ENCODE measurements at regions of chr10 and their contacts with region 1.

Region 1: DNA sequence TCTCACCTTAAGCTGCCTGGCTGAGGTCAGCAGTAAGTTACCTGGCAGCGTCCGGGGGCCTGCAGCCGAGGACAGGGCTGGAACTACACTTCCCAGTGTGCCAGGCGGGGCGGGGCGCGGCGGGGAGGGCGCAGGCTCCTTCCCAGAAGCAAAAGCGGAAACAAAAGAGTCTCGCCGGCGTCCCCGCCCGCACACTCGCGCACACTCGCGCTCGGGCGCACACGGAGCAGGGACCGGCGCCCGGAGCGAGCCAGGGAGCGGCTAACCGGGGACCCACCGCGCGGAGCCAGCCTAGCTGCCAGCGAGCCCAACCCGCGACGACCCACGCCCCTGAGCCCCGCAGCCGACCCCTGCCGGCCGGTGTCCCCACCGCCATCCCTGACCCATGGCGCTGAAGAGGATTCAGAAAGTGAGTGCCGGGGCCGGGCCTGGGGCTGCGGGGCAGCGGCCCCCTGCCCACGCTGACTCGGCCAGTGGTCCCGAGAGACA is at the start of gene UBE2D1:
- DNase-seq: peak; percentile 91 to 93
- ATAC-seq: peak; percentile 96 to 98 (median 97)
- H3K4me3 ChIP-seq: peak within 1 kb of the TSS; percentile 80 to 98 (median 91)
- H3K27ac ChIP-seq: peak within 1 kb of the TSS; percentile 86 to 96 (median 94)
- H3K4me1 ChIP-seq: peaks cover 0 to 50% (median 20%) of the 10 kb centered on the region in 9 donors
- H3K27me3 ChIP-seq: no peaks in the 10 kb centered on the region
- CTCF ChIP-seq: peak in 4 of 9 donors; percentile 15 to 38 (median 25)
- total RNA-seq, gene UBE2D1: 42.6 to 71.0 (median 62.0) TPM

Region 2: DNA sequence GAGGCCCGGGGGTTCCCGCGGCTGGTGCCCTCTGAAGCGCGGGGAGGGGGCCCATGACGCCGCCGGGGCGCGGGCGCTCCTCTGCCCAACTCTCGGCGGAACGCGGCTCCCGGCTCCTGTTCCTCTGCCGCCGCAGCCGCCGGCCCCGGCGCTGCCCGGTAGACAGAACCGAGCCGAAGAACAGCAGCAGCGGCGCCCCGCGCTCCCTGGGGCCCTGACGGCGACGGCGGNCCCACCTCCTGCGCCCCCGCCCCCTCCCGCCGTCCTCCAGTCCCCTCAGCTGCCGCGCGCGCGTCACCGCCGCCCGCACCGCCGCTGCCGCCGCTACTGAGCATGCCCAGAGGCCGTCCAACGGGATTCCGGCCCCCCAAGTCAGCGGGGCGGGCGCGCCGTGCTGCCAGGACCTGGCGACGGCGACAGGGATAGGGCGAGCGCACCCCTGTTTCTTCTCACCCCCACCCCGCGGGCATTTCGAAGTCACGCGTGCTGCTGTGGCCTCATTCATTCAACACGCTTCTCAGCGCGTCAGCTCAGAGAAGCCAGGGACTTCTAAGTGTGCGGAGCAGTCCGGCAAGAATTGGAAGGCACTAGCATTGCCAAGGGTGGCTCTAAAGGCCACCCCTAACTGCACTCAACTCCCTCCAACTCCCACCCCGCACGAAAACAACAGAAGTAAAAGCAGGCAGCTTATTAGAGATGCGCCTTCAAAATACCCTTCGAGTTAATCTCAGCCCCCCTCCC is 67.0 kb before region 1 on chr10 and contains the start of gene IPMK:
- intact Hi-C with region 1: loop called in 2 of 10 experiments (anchors 2 kb)
- DNase-seq: peak; percentile 94 to 97
- ATAC-seq: peak; percentile 84 to 95 (median 90)
- H3K4me3 ChIP-seq: peak within 1 kb of the TSS; percentile 72 to 87 (median 82)
- H3K27ac ChIP-seq: peak within 1 kb of the TSS; percentile 82 to 97 (median 94)
- H3K4me1 ChIP-seq: peaks cover 0 to 48% (median 33%) of the 10 kb centered on the region in 9 donors
- H3K27me3 ChIP-seq: no peaks in the 10 kb centered on the region
- CTCF ChIP-seq: no peak
- total RNA-seq, gene IPMK: 1.8 to 5.0 (median 2.6) TPM

Region 3: DNA sequence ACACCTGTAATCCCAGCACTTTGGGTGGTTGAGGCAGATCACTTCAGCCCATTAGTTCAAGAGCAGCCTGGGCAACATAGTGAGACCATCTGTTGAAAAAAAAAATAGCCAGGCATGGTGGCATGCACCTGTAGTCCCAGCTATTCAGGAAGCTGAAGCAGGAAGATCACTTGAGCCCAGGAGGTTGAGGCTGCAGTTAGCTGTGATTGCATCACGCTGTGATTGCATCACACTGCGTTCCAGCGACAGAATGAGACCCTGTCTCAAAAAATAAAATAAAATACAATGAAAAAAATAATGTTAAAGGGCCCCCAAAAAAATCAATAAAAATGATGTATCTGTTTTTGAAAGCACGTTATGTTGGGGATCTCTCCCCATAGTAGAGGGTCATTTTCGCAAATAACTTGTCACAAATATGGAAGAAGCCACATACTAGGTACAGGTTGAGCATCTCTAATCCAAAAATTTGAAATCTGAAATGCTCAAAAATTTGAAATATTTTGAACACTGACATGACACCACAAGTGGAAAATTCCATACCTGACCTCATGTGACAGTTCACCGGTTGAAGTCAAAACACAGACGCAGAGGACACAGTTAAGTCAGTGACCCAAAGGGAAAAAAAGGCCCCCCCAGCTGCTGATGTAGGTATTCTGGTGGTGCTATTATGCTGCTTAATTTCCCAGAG is 56.4 kb before region 1 on chr10:
- intact Hi-C with region 1: no loop called
- DNase-seq: no peak
- ATAC-seq: no peak
- H3K4me3 ChIP-seq: no peak overlapping the region
- H3K27ac ChIP-seq: no peak overlapping the region
- H3K4me1 ChIP-seq: peaks cover 0 to 40% (median 17%) of the 10 kb centered on the region in 9 donors
- H3K27me3 ChIP-seq: no peaks in the 10 kb centered on the region
- CTCF ChIP-seq: no peak

Region 4: DNA sequence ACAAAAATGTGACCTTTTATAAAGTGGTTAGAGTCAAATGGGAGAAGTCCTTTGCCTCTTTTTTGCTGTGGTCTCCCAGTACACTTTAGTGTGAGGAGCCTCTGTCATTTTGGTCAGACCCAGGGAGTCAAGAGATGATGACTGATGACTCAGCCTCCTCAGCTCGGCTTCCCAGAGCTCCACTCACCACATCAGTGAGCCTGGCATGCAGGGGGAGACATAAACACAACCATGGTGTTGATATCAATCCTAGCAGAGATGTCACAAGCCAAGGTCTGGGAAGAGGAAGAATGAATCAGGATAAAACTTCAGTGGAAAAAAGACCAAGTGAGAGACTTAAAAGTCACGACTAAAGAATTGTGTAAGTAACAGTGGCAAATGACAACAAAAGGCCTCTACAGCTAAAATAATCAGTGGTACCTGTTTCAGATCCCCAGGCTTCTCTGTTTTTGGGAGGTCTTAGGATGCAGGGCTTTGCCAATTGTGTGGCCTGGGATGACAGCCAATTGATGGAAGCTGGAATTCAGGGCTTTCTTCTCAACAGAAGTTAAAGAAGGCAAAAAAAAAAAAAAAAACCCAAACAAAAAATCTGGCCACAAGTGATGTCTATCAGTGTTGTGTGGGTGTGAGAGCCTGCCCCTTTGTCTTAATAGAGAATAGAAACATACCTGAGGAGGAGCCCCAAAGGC is 100.6 kb after region 1 on chr10:
- intact Hi-C with region 1: no loop called
- DNase-seq: peak in 1 of 2 donors; percentile 11
- ATAC-seq: peak in 6 of 8 donors; percentile 28 to 95 (median 54)
- H3K4me3 ChIP-seq: no peak overlapping the region
- H3K27ac ChIP-seq: peak overlapping the region in 1 of 10 donors; percentile 20
- H3K4me1 ChIP-seq: peaks cover 0 to 10% (median 0%) of the 10 kb centered on the region in 9 donors
- H3K27me3 ChIP-seq: no peaks in the 10 kb centered on the region
- CTCF ChIP-seq: no peak

Measured in heart right ventricle (tissue), 16 donors.